WTC11 (cell line): ENCODE measurements at regions of chr6 and their contacts with region 1.

Region 1: GRCh38 chr6:26122793-26123674 is 35.8 kb downstream of the HFE start:
- DNase-seq: peak; percentile 89
- ATAC-seq: peak; percentile 51
- H3K4me3 Mint-ChIP-seq: peak overlapping the region; percentile 95
- H3K27ac Mint-ChIP-seq: peak overlapping the region; percentile 99
- H3K4me1 Mint-ChIP-seq: peaks cover 40% of the 10 kb centered on the region
- H3K27me3 Mint-ChIP-seq: no peaks in the 10 kb centered on the region
- CTCF ChIP-seq: no peak

Region 2: DNA sequence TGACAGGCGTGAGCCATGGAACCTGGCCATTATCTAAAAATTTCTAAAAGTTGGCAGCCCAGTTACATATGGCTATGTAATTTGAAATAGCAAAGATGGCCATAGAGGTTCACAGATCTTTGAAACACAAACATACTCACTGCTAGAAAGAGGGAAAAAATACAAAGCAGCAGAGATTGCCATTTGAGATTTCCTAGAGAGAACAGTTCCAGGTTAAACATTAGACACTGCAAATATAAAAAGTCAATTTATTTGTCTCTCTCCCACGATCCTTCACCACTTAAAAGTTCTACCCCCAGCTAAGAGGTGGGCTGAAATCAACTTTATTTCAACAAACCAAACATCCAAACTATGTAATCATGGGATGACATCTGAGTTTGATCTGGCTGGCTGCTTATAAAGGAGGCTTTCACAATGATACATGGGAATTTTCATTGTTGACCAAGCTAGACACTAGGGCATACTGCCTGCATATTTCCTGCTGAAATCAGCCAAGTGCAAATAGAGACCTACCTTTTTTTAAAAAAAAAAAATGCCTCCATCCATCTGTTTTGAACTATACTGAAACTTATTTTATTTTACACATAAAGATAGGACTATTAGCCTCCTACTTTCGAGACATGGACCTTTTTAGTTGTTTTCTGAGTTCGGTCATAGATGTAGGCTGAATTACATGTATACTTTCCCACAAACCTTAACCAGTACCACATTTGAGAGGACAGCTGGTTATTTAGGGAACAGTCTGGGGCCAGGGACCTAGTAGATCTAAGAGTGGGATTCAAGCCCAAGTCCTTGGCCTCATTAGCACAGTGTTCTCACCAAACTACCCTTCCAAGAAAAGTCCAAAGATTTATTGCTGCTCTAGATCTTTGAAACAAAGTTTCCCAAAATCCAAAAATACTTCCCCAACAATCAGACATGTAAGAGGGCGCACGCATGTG is 1781.8 kb before region 1 on chr6:
- CTCF ChIA-PET with region 1: no interaction called
- POLR2A ChIA-PET with region 1: no interaction called
- DNase-seq: no peak
- ATAC-seq: no peak
- H3K4me3 Mint-ChIP-seq: no peak overlapping the region
- H3K27ac Mint-ChIP-seq: no peak overlapping the region
- H3K4me1 Mint-ChIP-seq: no peaks in the 10 kb centered on the region
- H3K27me3 Mint-ChIP-seq: peaks cover 6% of the 10 kb centered on the region; the same call in 1 of the 2 replicates
- CTCF ChIP-seq: no peak

Region 3: GRCh38 chr6:26031595-26032339 is 91.3 kb before region 1 on chr6:
- CTCF ChIA-PET with region 1: interaction called, 4 read pairs
- POLR2A ChIA-PET with region 1: interaction called, 260 read pairs
- DNase-seq: peak; percentile 80
- ATAC-seq: peak; percentile 67
- H3K4me3 Mint-ChIP-seq: peak overlapping the region; percentile 91
- H3K27ac Mint-ChIP-seq: peak overlapping the region; percentile 100
- H3K4me1 Mint-ChIP-seq: peaks cover 59% of the 10 kb centered on the region
- H3K27me3 Mint-ChIP-seq: no peaks in the 10 kb centered on the region
- CTCF ChIP-seq: no peak

Region 4: DNA sequence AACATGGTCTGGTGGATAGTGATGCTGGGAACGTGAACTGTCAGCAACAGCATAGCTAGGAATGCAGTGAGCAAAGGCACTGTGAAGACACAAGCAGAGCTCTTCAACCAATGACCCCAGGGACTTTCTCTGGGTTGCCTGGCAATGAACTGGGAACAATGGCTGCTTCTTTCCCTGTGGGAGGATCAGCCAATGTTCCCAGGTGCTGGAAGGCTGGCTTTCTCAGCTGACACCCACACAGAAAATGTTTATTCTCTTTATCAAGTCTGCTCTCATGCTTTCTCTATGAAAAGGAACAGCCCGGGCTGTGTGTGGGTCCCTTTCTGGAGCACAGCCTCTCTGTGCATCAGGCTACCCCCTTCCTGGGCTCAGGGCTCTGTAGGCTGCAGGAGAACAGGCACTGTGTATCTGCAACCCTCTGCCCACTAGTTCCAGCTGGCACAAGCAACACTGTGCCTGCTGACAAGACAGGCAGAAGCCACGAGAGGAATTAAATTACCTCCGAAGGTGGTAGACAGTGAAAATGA is 18.4 kb after region 1 on chr6:
- CTCF ChIA-PET with region 1: no interaction called
- POLR2A ChIA-PET with region 1: interaction called, 16 read pairs
- DNase-seq: no peak
- ATAC-seq: peak; percentile 62
- H3K4me3 Mint-ChIP-seq: no peak overlapping the region
- H3K27ac Mint-ChIP-seq: no peak overlapping the region
- H3K4me1 Mint-ChIP-seq: peaks cover 19% of the 10 kb centered on the region
- H3K27me3 Mint-ChIP-seq: no peaks in the 10 kb centered on the region
- CTCF ChIP-seq: no peak

Region 5: DNA sequence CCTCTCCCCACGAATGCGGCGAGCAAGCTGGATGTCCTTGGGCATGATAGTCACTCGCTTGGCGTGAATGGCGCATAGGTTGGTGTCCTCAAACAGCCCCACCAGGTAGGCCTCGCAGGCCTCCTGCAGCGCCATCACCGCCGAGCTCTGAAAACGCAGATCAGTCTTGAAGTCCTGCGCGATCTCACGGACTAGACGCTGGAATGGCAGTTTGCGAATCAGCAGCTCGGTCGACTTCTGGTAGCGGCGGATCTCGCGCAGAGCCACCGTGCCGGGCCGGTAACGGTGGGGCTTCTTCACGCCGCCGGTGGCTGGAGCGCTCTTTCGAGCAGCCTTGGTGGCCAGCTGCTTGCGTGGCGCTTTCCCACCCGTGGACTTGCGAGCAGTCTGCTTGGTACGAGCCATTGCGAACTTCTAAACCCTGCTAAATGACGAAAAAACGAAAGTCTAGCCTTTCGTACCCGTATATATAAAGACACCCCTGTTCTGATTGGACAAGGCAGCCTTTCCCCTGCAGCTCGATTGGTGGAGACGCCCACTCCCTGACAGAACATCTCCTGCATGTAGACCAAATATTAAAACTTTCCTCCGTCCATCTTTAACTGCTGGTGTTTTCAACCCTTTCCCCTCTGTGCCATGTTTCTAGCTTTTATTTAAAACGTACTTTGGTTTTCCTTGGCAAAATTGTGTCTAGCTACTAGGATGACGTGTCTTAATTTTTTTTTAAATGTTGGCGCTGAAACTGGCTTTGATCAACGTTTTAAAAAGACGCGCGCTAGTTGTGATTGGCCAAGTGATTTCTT is 74.0 kb after region 1 on chr6:
- CTCF ChIA-PET with region 1: no interaction called
- POLR2A ChIA-PET with region 1: interaction called, 212 read pairs
- DNase-seq: peak; percentile 75
- ATAC-seq: peak; percentile 43
- H3K4me3 Mint-ChIP-seq: peak overlapping the region; percentile 99
- H3K27ac Mint-ChIP-seq: peak overlapping the region; percentile 100
- H3K4me1 Mint-ChIP-seq: peaks cover 39% of the 10 kb centered on the region
- H3K27me3 Mint-ChIP-seq: no peaks in the 10 kb centered on the region
- CTCF ChIP-seq: no peak

Region 6: GRCh38 chr6:26249957-26250697 is 127.1 kb after region 1 on chr6:
- CTCF ChIA-PET with region 1: no interaction called
- POLR2A ChIA-PET with region 1: interaction called, 59 read pairs
- DNase-seq: peak; percentile 74
- ATAC-seq: peak; percentile 53
- H3K4me3 Mint-ChIP-seq: peak overlapping the region; percentile 96
- H3K27ac Mint-ChIP-seq: peak overlapping the region; percentile 98
- H3K4me1 Mint-ChIP-seq: peaks cover 27% of the 10 kb centered on the region
- H3K27me3 Mint-ChIP-seq: no peaks in the 10 kb centered on the region
- CTCF ChIP-seq: no peak

Region 7: GRCh38 chr6:26445934-26446667 is 323.1 kb after region 1 on chr6:
- CTCF ChIA-PET with region 1: no interaction called
- POLR2A ChIA-PET with region 1: no interaction called
- DNase-seq: no peak
- ATAC-seq: no peak
- H3K4me3 Mint-ChIP-seq: no peak overlapping the region
- H3K27ac Mint-ChIP-seq: no peak overlapping the region
- H3K4me1 Mint-ChIP-seq: no peaks in the 10 kb centered on the region
- H3K27me3 Mint-ChIP-seq: peaks cover 4% of the 10 kb centered on the region; the same call in 1 of the 2 replicates
- CTCF ChIP-seq: no peak

Region 8: DNA sequence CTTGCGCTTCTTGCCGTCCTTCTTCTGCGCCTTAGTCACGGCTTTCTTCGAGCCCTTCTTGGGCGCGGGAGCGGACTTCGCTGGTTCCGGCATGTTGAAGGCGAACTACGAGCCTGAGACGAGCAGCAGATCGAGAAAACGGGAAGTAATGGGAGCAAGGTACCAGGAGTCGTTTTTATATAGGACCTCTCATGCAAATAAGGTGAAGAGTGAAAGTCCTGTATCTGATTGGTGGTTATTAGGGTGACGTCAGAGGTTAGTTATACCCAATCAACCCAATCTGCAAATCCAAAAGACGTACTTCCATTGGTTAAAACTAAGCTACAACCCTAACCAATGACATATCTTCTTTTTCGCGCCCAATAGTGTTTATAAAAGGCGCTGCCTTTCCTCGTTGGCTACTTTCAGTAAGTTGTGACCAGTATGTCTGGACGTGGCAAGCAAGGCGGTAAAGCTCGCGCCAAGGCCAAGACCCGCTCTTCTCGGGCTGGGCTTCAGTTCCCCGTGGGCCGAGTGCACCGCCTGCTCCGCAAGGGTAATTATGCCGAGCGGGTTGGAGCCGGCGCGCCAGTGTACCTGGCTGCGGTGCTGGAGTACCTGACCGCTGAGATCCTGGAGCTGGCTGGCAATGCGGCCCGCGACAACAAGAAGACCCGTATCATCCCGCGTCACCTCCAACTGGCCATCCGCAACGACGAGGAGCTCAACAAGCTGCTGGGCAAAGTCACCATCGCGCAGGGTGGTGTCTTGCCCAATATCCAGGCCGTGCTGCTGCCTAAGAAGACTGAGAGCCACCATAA is 1023.9 kb after region 1 on chr6:
- CTCF ChIA-PET with region 1: no interaction called
- POLR2A ChIA-PET with region 1: interaction called, 10 read pairs
- DNase-seq: peak; percentile 80
- ATAC-seq: peak; percentile 67
- H3K4me3 Mint-ChIP-seq: no peak overlapping the region
- H3K27ac Mint-ChIP-seq: no peak overlapping the region
- H3K4me1 Mint-ChIP-seq: peaks cover 23% of the 10 kb centered on the region
- H3K27me3 Mint-ChIP-seq: no peaks in the 10 kb centered on the region
- CTCF ChIP-seq: no peak

Region 9: DNA sequence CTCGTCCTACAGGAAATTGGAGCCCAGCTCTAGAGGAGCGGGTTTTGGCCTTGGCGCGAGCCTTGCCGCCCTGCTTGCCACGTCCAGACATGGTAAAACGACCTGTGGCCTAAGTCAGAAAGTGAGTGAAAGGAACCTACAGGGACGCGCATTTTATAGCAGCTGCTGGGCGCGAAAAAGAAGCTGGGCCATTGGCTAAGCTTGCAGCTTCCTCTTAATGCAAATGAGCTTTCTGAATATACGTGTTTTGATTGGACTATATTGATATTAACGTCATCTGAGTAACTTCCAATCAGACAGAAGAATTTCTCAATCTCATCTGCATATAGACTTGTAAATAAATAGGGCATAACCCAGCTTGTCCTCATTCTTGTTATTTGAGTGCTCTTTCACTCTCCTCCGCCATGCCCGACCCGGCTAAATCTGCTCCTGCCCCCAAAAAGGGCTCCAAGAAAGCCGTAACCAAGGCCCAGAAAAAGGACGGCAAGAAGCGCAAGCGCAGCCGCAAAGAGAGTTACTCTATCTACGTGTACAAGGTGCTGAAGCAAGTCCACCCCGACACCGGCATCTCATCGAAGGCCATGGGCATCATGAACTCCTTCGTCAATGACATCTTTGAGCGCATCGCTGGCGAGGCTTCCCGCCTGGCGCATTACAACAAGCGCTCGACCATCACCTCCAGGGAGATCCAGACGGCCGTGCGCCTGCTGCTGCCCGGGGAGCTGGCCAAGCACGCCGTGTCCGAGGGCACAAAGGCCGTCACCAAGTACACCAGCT is 1770.2 kb after region 1 on chr6:
- CTCF ChIA-PET with region 1: no interaction called
- POLR2A ChIA-PET with region 1: interaction called, 23 read pairs
- DNase-seq: peak; percentile 91
- ATAC-seq: peak; percentile 46
- H3K4me3 Mint-ChIP-seq: no peak overlapping the region
- H3K27ac Mint-ChIP-seq: peak overlapping the region; percentile 99
- H3K4me1 Mint-ChIP-seq: peaks cover 42% of the 10 kb centered on the region
- H3K27me3 Mint-ChIP-seq: no peaks in the 10 kb centered on the region; the same call in 1 of the 2 replicates
- CTCF ChIP-seq: no peak